Natural killer cell (primary cell): ENCODE measurements at regions of chr12 and their contacts with region 1.

Region 1: GRCh38 chr12:55073043-55074022 is 52.9 kb upstream of the OR9K2 start:
- DNase-seq: peak; percentile 68 to 93
- ATAC-seq: peak; percentile 74 to 84 (median 79)
- H3K4me3 ChIP-seq: no peak overlapping the region
- H3K4me3 Mint-ChIP-seq: no peak overlapping the region
- H3K27ac ChIP-seq: no peak overlapping the region
- H3K27ac Mint-ChIP-seq: no peak overlapping the region
- H3K4me1 ChIP-seq: no peaks in the 10 kb centered on the region
- H3K4me1 Mint-ChIP-seq: no peaks in the 10 kb centered on the region
- H3K27me3 ChIP-seq: peaks cover 9% of the 10 kb centered on the region
- H3K27me3 Mint-ChIP-seq: peaks cover 22 to 34% of the 10 kb centered on the region in 2 donors
- CTCF ChIP-seq: peak; percentile 95

Region 2: DNA sequence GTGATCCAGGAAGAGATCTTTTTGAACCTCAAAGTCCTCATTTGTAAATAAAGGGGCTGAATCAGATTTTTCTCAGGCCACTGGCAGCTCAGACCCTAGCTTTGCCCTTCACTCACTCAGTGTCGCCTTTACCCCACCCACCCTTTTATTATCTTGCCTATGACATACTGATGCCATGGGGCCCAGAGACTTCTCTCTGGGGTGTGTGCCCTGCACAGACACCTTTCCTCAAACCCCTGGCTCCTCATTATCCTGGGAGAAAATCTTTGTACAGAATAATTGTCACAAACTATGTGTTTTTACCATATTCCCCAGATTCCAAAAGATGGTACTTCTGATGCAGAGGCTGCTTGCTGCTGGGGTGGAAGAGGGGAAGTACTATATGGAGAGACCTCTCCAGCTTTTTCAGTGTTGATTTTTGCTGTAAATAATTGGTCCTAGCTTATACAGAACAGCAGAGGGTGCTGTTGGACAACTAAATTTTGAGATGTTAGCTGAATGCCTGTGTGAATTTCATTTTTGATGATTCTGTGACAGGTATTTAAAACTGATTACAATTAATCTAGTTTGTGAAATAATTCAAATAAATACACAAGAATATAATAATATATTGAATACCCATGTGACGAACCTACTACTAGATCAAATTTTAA is 371.3 kb before region 1 on chr12:
- intact Hi-C with region 1: loop called (anchors 1 kb)
- DNase-seq: peak in 1 of 2 donors; percentile 83
- ATAC-seq: peak; percentile 72 to 81 (median 73)
- H3K4me3 ChIP-seq: no peak overlapping the region
- H3K4me3 Mint-ChIP-seq: no peak overlapping the region
- H3K27ac ChIP-seq: no peak overlapping the region
- H3K27ac Mint-ChIP-seq: no peak overlapping the region
- H3K4me1 ChIP-seq: no peaks in the 10 kb centered on the region
- H3K4me1 Mint-ChIP-seq: no peaks in the 10 kb centered on the region
- H3K27me3 ChIP-seq: no peaks in the 10 kb centered on the region
- H3K27me3 Mint-ChIP-seq: peaks cover 18 to 27% of the 10 kb centered on the region in 2 donors
- CTCF ChIP-seq: peak; percentile 73

Region 3: GRCh38 chr12:54749191-54749818 is 324.0 kb before region 1 on chr12:
- intact Hi-C with region 1: loop called (anchors 1 kb)
- DNase-seq: peak in 1 of 2 donors; percentile 86
- ATAC-seq: peak; percentile 82 to 87 (median 85)
- H3K4me3 ChIP-seq: no peak overlapping the region
- H3K4me3 Mint-ChIP-seq: peak overlapping the region; percentile 59
- H3K27ac ChIP-seq: no peak overlapping the region
- H3K27ac Mint-ChIP-seq: no peak overlapping the region
- H3K4me1 ChIP-seq: peaks cover 3% of the 10 kb centered on the region
- H3K4me1 Mint-ChIP-seq: peaks cover 11 to 20% of the 10 kb centered on the region in 2 donors
- H3K27me3 ChIP-seq: no peaks in the 10 kb centered on the region
- H3K27me3 Mint-ChIP-seq: no peaks in the 10 kb centered on the region
- CTCF ChIP-seq: peak; percentile 84

Region 4: GRCh38 chr12:54853995-54854566 is 219.3 kb before region 1 on chr12 and contains the start of gene MUCL1:
- intact Hi-C with region 1: loop called (anchors 2 kb)
- DNase-seq: peak; percentile 39 to 85
- ATAC-seq: peak; percentile 98 to 100 (median 100)
- H3K4me3 ChIP-seq: no peak within 1 kb of the TSS
- H3K4me3 Mint-ChIP-seq: no peak within 1 kb of the TSS
- H3K27ac ChIP-seq: no peak within 1 kb of the TSS
- H3K27ac Mint-ChIP-seq: peak within 1 kb of the TSS in 1 of 2 donors; percentile 21
- H3K4me1 ChIP-seq: no peaks in the 10 kb centered on the region
- H3K4me1 Mint-ChIP-seq: peaks cover 6 to 8% of the 10 kb centered on the region in 2 donors
- H3K27me3 ChIP-seq: no peaks in the 10 kb centered on the region
- H3K27me3 Mint-ChIP-seq: no peaks in the 10 kb centered on the region
- CTCF ChIP-seq: peak; percentile 96
- total RNA-seq, gene MUCL1: not detected

Region 5: GRCh38 chr12:54993161-54993835 is 80.0 kb before region 1 on chr12:
- intact Hi-C with region 1: loop called (anchors 1 kb)
- DNase-seq: peak; percentile 37 to 91
- ATAC-seq: peak; percentile 88 to 94 (median 90)
- H3K4me3 ChIP-seq: no peak overlapping the region
- H3K4me3 Mint-ChIP-seq: no peak overlapping the region
- H3K27ac ChIP-seq: no peak overlapping the region
- H3K27ac Mint-ChIP-seq: no peak overlapping the region
- H3K4me1 ChIP-seq: peaks cover 8% of the 10 kb centered on the region
- H3K4me1 Mint-ChIP-seq: peaks cover 23 to 29% of the 10 kb centered on the region in 2 donors
- H3K27me3 ChIP-seq: no peaks in the 10 kb centered on the region
- H3K27me3 Mint-ChIP-seq: peaks cover 6 to 7% of the 10 kb centered on the region in 2 donors
- CTCF ChIP-seq: peak; percentile 97